Cardiac septum (tissue), 1 donor: ENCODE measurements at regions of chr4 and their contacts with region 1.

Region 1: GRCh38 chr4:53855581-53856250 is 208.7 kb downstream of the CHIC2 start:
- DNase-seq: no peak

Region 2: DNA sequence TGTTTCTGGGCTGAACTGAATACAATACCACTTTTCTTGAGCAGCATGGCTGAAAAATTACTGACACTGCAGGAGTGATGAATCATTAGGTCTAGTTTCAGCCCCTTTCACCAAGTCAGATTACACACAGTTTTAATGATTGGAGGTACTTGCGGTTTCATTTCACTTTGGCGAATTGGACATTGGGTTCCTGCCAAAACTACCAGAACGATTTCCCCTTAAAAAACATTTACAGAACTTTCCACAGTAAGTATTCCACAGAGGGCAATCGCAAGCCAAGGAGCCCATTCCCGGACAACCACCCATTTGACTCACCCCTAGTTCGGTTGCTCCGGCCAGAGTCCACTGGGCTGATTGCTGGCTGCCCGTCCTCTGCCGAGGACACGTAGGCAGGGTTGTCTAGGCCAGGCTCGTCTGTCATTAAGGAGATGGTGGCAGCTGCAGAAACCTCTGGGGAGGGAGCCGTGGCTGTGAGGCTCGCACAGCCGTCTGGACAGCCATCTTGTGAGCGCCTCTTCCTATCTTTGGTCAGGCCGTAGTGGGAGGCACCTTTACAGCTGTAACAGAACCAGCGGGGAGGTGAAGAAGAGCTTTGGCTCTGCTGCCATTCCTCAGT is 347.9 kb before region 1 on chr4:
- intact Hi-C with region 1: loop called (anchors 10 kb)
- DNase-seq: peak; percentile 80

Region 3: DNA sequence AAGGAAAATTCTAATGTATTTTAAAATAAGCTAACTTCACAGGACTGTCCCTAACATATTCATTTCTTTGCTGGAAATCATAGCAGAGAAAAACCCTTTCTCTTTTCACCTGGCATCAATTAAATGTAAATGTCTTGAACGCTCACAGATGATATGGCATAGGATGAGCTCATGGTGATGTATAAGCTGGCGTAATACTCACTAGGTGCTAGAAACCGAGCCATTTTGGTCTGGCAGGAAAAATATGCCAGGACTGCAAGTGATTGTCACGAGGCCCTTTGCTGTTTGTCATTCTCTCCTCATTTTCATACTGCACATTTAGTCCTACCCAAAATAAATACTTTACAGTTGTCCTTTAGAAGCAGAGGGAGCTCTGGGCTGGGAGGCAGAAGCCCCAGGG is 41.7 kb before region 1 on chr4:
- intact Hi-C with region 1: no loop called
- DNase-seq: no peak

Region 4: GRCh38 chr4:53951414-53951813 is 95.7 kb after region 1 on chr4:
- intact Hi-C with region 1: no loop called
- DNase-seq: no peak

Region 5: DNA sequence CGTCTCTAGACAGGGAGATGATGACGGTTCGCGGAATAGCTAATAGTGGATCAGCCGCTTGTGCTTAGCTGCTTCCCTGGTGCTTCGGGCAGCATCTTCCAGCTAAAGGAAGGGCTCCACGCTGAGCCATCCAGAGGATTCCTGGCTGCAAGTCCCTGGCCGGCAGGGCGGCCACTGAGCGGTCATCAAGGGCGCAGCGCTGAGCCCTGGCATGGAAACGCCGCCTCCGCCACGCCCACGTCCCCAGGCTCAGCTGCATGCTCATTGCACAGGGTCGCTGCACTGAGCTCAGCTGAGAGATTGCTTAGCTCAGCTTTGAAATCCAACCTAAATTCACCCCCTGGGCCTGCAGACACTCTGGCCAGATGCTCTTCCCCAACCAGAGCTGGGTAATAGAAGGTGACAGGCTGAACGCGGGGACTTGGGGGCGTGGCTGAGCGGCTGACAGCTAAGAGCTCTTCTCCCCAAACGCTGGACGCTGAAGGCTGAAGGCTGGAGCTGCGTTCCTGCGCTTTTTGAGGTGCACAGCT is 683.8 kb after region 1 on chr4:
- intact Hi-C with region 1: no loop called
- DNase-seq: no peak